ENCODE measurements at regions of chr7 and their contacts with region 1.

Region 1: GRCh38 chr7:66013916-66014315 is 31.9 kb upstream of the GUSB start:
- DNase-seq: no peak
- H3K4me3 ChIP-seq: no peak overlapping the region
- H3K27ac ChIP-seq: no peak overlapping the region
- H3K4me1 ChIP-seq: peaks cover 19% of the 10 kb centered on the region
- H3K27me3 ChIP-seq: no peaks in the 10 kb centered on the region
- CTCF ChIP-seq: peak; percentile 51; the same call in 1 of the 2 replicates

Region 2: DNA sequence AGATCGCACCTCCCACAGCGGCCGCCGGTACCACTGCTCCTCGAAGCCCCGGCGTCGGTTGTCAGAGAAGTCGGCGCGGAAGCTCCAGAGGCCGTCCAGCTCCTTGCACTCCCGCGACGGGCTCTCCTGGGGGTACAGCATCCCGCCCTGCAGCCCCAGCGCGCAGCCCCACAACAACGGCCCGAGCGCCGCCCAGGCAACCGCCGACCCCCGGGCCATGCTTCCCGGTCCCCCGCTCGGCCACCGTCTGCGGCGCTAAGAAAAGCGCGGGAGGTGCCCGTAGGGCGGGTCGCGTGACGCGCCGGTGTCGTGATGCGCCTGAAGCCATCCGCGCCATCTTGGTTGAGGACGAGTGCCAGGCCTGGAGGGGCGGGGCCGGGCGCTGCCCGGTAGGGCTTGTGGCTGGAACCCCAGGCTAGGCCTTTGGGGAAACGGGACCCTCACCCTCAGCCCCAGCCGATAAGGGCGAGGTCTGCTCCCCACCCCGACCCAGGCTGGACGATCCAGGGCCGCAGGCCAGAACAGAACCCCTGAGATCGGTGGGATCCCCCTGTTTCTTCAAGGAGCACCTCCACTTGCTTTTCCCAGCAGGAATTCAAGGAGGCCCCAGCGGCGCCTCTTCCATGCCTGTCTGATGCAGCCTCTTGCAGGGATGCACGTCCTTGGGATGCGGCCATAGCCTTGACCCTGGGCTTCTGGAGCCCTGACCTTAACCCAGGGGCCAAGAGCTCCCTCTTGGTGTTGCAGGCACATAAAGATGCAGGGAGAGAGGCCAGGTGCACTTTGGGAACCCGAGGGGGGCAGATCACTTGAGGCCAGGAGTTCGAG is 31.7 kb before region 1 on chr7 and contains the start of gene GUSB:
- CTCF ChIA-PET with region 1: no interaction called
- POLR2A ChIA-PET with region 1: no interaction called
- intact Hi-C with region 1: loop called (anchors 1 kb)
- DNase-seq: peak; percentile 72 to 91
- H3K4me3 ChIP-seq: peak within 1 kb of the TSS; percentile 80
- H3K27ac ChIP-seq: peak within 1 kb of the TSS; percentile 23; the same call in 1 of the 2 replicates
- H3K4me1 ChIP-seq: peaks cover 25% of the 10 kb centered on the region
- H3K27me3 ChIP-seq: no peaks in the 10 kb centered on the region
- CTCF ChIP-seq: no peak
- total RNA-seq, gene GUSB: 59.8 and 80.8 TPM in 2 replicates

Region 3: DNA sequence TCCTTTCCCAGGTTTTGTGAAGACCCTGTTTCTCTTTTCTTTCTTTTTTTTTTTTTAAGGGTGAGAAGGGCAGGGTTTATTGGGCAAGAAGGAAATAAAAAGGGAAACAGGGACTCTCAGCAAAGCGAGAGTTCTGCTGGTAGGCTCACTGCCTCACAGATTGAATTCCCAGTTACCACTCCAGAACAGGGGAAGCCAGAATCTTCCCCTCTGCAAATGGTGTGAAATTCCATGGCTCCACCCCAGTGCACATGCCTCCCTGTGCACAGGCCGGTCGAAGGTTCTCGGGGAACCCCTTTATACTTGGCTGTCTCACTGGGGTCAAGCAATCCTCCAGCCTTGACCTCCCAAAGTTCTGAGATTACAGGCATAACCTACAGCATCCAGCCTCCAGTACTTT is 21.4 kb before region 1 on chr7:
- CTCF ChIA-PET with region 1: no interaction called
- POLR2A ChIA-PET with region 1: no interaction called
- intact Hi-C with region 1: no loop called
- DNase-seq: no peak
- H3K4me3 ChIP-seq: no peak overlapping the region
- H3K27ac ChIP-seq: no peak overlapping the region
- H3K4me1 ChIP-seq: no peaks in the 10 kb centered on the region
- H3K27me3 ChIP-seq: no peaks in the 10 kb centered on the region
- CTCF ChIP-seq: no peak

Region 4: DNA sequence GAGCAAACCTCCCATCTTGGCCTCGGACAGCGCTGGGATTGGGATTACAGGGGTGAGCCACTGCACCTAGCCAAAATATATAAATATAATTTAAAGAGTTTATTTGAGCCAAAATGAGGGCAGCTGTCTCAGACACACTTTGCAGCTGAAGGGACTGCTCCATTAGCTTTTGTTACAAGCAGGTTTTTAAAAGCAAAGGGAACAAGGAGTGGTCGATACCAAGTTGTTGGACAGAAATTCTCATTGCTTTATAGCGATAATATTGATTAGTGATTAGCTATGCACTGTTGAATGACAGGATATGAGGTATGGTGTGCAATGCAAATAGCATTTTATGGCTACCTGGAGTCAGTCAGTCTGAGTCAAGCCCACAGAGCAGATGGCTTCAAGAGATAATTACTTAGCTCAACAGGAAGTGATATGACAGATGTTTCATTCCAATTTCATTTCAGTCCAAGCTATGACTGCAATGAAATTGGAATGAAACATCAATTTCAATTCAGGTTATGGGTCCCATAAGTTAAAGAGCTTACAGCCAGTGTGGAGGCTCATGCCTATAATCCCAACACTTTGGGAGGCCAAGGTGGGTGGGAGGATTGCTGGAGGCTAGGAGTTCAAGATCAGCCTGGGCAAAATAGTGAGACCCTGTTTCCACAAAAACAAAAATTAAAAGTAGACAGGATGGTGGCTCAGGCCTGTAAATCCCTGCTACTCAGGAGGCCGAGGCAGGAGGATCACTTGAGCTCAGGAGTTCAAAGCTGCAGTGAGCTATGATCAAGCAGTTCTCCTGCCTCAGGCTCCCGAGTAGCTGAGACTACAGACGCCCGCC is 1005.9 kb after region 1 on chr7:
- CTCF ChIA-PET with region 1: no interaction called
- POLR2A ChIA-PET with region 1: interaction called, 11 read pairs
- intact Hi-C with region 1: no loop called
- DNase-seq: no peak
- H3K4me3 ChIP-seq: no peak overlapping the region
- H3K27ac ChIP-seq: no peak overlapping the region
- H3K4me1 ChIP-seq: no peaks in the 10 kb centered on the region
- H3K27me3 ChIP-seq: no peaks in the 10 kb centered on the region
- CTCF ChIP-seq: no peak

Measured in PC-9 (cell line).